Activated CD8-positive, alpha-beta T cell treated with anti-CD3 and anti-CD28 coated beads for 36 hours (primary cell): ENCODE measurements at regions of chr11 and their contacts with region 1.

Region 1: GRCh38 chr11:46352063-46352841 is 5.0 kb downstream of the DGKZ start:
- DNase-seq: peak; percentile 86
- ATAC-seq: peak; percentile 63
- H3K4me3 Mint-ChIP-seq: peak overlapping the region; percentile 78
- H3K27ac Mint-ChIP-seq: peak overlapping the region; percentile 89
- H3K4me1 Mint-ChIP-seq: peaks cover 76% of the 10 kb centered on the region
- H3K27me3 Mint-ChIP-seq: no peaks in the 10 kb centered on the region
- CTCF ChIP-seq: peak; percentile 100

Region 2: DNA sequence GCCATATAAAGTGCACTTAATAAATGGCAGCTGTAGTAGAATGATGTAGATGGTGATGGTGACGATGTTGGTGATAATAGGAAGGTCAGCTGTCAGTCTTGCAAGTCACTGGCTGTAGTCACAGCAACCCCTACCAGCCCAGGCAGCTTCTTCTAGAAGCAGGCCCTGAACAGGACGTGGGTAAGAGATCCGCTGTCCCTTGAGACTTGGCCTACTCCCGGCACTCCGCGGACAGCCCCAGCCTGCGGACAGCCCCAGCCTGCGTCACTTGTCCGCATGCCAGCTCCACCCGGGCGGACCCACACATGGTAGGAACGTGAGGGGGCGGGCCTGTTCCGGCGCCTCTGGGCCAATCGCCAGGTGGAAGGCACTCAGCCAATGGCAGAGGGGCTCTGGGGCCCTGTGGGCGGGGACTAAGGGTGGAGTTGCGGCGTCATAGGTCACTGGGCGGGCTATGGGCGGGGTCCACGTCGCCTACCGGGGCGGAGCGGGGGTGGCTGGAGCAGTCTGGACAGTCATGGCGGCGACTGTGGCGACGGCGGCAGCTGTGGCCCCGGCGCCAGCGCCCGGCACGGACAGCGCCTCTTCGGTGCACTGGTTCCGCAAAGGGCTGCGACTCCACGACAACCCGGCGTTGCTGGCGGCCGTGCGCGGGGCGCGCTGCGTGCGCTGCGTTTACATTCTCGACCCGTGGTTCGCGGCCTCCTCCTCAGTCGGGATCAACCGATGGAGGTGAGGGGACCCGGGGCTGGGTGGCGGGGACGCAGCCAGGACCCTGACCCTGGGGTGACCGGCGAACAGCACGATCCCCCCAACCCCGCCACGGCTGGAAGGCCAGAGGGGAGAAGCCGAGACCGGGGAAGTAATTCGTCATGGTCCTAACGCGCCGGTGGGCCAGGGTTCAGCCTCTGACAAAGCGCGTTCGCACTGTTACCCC is 505.0 kb before region 1 on chr11 and contains the start of gene CRY2:
- CTCF ChIA-PET with region 1: no interaction called
- POLR2A ChIA-PET with region 1: no interaction called
- intact Hi-C with region 1: no loop called
- DNase-seq: peak; percentile 99
- ATAC-seq: peak; percentile 92
- H3K4me3 Mint-ChIP-seq: peak within 1 kb of the TSS; percentile 79
- H3K27ac Mint-ChIP-seq: peak within 1 kb of the TSS; percentile 85
- H3K4me1 Mint-ChIP-seq: peaks cover 48% of the 10 kb centered on the region
- H3K27me3 Mint-ChIP-seq: no peaks in the 10 kb centered on the region
- CTCF ChIP-seq: no peak
- total RNA-seq, gene CRY2: 12.3 to 15.7 TPM

Region 3: GRCh38 chr11:46160100-46160499 is 192.2 kb before region 1 on chr11:
- CTCF ChIA-PET with region 1: no interaction called
- POLR2A ChIA-PET with region 1: no interaction called
- intact Hi-C with region 1: no loop called
- DNase-seq: no peak
- ATAC-seq: no peak
- H3K4me3 Mint-ChIP-seq: no peak overlapping the region
- H3K27ac Mint-ChIP-seq: no peak overlapping the region
- H3K4me1 Mint-ChIP-seq: peaks cover 3% of the 10 kb centered on the region
- H3K27me3 Mint-ChIP-seq: peaks cover 33% of the 10 kb centered on the region
- CTCF ChIP-seq: no peak

Region 4: GRCh38 chr11:46332568-46333393 is 19.5 kb before region 1 on chr11:
- CTCF ChIA-PET with region 1: interaction called, 71 read pairs
- POLR2A ChIA-PET with region 1: interaction called, 24 read pairs
- intact Hi-C with region 1: no loop called
- DNase-seq: peak; percentile 71
- ATAC-seq: peak; percentile 31
- H3K4me3 Mint-ChIP-seq: peak overlapping the region; percentile 67
- H3K27ac Mint-ChIP-seq: peak overlapping the region; percentile 16
- H3K4me1 Mint-ChIP-seq: peaks cover 45% of the 10 kb centered on the region
- H3K27me3 Mint-ChIP-seq: no peaks in the 10 kb centered on the region
- CTCF ChIP-seq: no peak

Region 5: GRCh38 chr11:46338988-46339666 is 13.1 kb before region 1 on chr11:
- CTCF ChIA-PET with region 1: interaction called, 480 read pairs
- POLR2A ChIA-PET with region 1: interaction called, 24 read pairs
- intact Hi-C with region 1: no loop called
- DNase-seq: no peak
- ATAC-seq: no peak
- H3K4me3 Mint-ChIP-seq: no peak overlapping the region
- H3K27ac Mint-ChIP-seq: no peak overlapping the region
- H3K4me1 Mint-ChIP-seq: peaks cover 39% of the 10 kb centered on the region
- H3K27me3 Mint-ChIP-seq: no peaks in the 10 kb centered on the region
- CTCF ChIP-seq: no peak

Region 6: DNA sequence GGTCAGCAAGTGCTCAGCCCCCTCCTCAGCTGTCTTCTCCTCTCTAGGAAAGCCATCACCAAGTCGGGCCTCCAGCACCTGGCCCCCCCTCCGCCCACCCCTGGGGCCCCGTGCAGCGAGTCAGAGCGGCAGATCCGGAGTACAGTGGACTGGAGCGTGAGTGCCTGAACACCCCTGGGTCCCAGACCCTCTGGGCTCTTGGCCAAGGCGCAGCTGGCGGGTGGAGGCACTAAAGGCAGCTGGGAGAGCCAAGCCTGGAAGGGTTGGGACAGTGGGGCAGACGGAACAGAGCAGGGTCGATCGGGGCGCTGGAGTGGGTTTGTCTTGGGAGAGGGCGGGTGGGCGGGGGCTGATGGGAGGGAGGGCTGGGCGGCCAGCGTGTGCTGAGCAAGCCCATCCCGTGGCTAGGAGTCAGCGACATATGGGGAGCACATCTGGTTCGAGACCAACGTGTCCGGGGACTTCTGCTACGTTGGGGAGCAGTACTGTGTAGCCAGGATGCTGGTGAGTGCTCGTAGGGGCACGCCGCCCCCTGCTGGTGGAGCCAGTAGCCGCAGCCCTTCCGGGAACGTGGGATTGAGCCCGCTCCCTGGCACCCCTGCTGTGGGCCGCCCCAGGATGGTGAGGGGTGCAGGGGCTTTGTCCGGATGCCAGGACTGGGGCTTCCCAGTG is 15.1 kb after region 1 on chr11:
- CTCF ChIA-PET with region 1: interaction called, 480 read pairs
- POLR2A ChIA-PET with region 1: interaction called, 135 read pairs
- intact Hi-C with region 1: loop called (anchors 2 kb)
- DNase-seq: peak; percentile 88
- ATAC-seq: peak; percentile 89
- H3K4me3 Mint-ChIP-seq: peak overlapping the region; percentile 42
- H3K27ac Mint-ChIP-seq: peak overlapping the region; percentile 88
- H3K4me1 Mint-ChIP-seq: peaks cover 40% of the 10 kb centered on the region
- H3K27me3 Mint-ChIP-seq: no peaks in the 10 kb centered on the region
- CTCF ChIP-seq: peak; percentile 96

Region 7: GRCh38 chr11:46380340-46381047 is 28.2 kb after region 1 on chr11:
- CTCF ChIA-PET with region 1: interaction called, 22 read pairs
- POLR2A ChIA-PET with region 1: interaction called, 6 read pairs
- intact Hi-C with region 1: no loop called
- DNase-seq: peak; percentile 91
- ATAC-seq: peak; percentile 68
- H3K4me3 Mint-ChIP-seq: peak overlapping the region; percentile 68
- H3K27ac Mint-ChIP-seq: peak overlapping the region; percentile 70
- H3K4me1 Mint-ChIP-seq: peaks cover 15% of the 10 kb centered on the region
- H3K27me3 Mint-ChIP-seq: peaks cover 7% of the 10 kb centered on the region
- CTCF ChIP-seq: no peak

Region 8: GRCh38 chr11:46392421-46393230 is 40.4 kb after region 1 on chr11:
- CTCF ChIA-PET with region 1: interaction called, 34 read pairs
- POLR2A ChIA-PET with region 1: interaction called, 6 read pairs
- intact Hi-C with region 1: no loop called
- DNase-seq: peak; percentile 81
- ATAC-seq: peak; percentile 85
- H3K4me3 Mint-ChIP-seq: peak overlapping the region; percentile 65
- H3K27ac Mint-ChIP-seq: no peak overlapping the region
- H3K4me1 Mint-ChIP-seq: peaks cover 24% of the 10 kb centered on the region
- H3K27me3 Mint-ChIP-seq: peaks cover 41% of the 10 kb centered on the region
- CTCF ChIP-seq: no peak